AG04450 (cell line): ENCODE measurements at regions of chr9 and their contacts with region 1.

Region 1: GRCh38 chr9:98745470-98745869 is 36.7 kb upstream of the GABBR2 start:
- DNase-seq: no peak
- H3K4me3 ChIP-seq: no peak overlapping the region
- H3K27ac ChIP-seq: no peak overlapping the region
- H3K27me3 ChIP-seq: no peaks in the 10 kb centered on the region
- CTCF ChIP-seq: no peak

Region 2: DNA sequence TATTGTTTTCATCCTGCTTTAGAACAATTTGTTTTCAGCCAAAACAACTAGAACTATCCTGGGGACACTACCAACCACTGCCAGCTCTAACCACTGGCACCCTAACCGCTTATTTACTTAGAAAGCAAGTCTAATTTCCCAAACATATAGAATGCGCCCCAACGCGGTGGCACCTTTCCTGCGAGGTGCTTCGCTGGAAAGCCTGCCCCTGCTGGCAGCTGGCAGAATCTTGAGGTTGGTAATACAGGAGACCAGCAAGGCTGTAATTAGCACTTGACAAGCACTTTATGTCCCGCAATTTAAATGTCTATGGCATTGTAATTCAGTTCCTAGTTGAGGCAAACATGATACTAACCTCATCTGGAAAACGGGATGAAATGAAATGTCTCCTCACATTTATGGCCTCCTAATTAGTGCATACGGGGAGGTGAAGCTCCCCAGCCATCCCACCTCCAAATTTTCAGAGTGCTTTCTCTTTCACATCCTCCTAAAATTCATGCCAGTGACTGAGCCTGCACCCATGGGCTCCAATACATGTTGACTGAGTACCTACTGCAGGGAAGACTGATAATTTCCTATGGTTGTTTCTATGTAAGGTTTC is 67.1 kb before region 1 on chr9:
- CTCF ChIA-PET with region 1: no interaction called
- POLR2A ChIA-PET with region 1: interaction called, 12 read pairs
- DNase-seq: no peak
- H3K4me3 ChIP-seq: no peak overlapping the region
- H3K27ac ChIP-seq: no peak overlapping the region
- H3K27me3 ChIP-seq: peaks cover 20% of the 10 kb centered on the region
- CTCF ChIP-seq: peak; percentile 59

Region 3: GRCh38 chr9:98726735-98727134 is 18.7 kb before region 1 on chr9:
- CTCF ChIA-PET with region 1: no interaction called
- POLR2A ChIA-PET with region 1: no interaction called
- DNase-seq: peak; percentile 51
- H3K4me3 ChIP-seq: no peak overlapping the region
- H3K27ac ChIP-seq: no peak overlapping the region
- H3K27me3 ChIP-seq: peaks cover 25% of the 10 kb centered on the region
- CTCF ChIP-seq: no peak

Region 4: GRCh38 chr9:98929071-98929470 is 183.6 kb after region 1 on chr9:
- CTCF ChIA-PET with region 1: no interaction called
- POLR2A ChIA-PET with region 1: no interaction called
- DNase-seq: peak; percentile 4
- H3K4me3 ChIP-seq: no peak overlapping the region
- H3K27ac ChIP-seq: no peak overlapping the region
- H3K27me3 ChIP-seq: peaks cover 7% of the 10 kb centered on the region
- CTCF ChIP-seq: no peak